GM10248 (cell line): ENCODE measurements at regions of chr6 and their contacts with region 1.

Region 1: DNA sequence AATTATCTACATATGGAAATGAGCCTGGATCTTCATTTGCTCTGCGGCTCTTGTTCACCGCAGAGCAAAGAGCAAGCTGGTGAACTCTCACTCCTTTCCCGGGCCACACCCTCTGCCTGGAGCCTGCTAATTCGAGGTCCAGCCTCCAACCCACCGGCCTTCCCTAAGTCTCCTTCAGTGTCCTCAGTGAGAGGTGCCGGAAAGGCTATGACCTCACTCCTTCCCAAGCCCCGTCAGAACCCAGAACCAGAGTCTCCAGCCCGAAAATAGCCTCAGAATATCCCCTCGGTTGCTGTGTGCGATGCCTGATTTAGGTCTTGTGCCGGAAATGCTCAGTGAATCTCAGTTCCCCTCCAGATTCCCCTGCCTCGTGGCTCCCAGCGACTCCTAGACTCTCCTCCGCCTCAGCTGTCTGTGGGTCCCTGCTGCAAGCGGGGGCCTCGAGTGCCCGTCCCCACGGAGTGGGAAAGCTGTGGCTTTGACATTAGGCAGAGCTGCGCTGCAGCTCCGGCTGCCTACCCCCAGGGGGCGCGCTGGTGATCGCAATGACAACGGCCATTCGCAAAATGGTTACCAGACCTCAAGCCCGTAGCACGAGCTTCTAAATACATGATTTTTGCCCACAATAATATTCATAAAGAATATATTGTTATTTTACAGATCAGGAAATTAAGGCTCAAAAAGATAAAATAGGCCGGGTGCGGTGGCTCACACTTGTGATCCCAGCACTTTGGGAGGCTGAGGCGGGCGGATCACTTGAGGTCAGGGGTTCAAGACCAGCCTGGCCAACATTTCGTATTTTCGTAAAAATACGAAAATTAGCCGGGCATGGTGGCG is 4.1 kb upstream of the BNIP5 start:
- DNase-seq: peak; percentile 83
- CTCF ChIP-seq: peak; percentile 96

Region 2: GRCh38 chr6:36027501-36028087 is 313.2 kb before region 1 on chr6 and contains the start of gene MAPK14:
- CTCF ChIA-PET with region 1: no interaction called
- POLR2A ChIA-PET with region 1: interaction called, 14 read pairs
- DNase-seq: peak; percentile 98
- CTCF ChIP-seq: peak; percentile 87

Region 3: DNA sequence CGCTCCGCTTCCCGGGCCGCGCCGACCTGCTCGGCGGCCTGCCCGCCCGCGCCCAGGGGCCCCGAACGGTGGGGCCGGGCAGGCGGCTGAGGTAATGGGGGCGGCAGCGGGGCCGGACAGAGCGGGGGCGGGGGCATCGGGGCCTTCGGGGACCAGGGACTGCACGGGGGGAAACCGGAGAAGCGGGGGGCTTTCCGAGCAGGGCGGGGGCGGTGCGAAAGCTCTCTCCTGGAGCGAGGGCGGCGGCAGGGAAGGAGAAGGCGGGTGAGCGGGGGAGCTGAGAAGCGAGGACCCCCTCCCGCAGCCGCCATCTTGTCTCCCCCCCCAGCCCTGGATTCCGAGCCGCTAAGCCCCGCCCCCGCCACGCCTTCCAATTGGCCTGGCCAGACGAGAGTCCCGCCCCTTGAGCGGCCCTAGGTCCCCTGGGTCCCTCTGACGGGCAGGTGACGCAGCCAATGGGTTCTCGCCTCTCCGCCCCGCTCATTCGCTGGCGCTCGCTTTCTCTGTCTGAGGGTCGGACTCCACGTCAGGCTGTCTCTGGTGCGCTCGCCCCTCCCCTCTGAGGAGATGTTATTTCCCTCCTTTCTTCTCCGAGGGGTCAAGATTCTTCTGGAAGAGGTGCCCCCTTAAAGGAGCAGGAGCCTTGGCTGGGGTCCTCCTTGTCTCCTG is 143.8 kb before region 1 on chr6:
- CTCF ChIA-PET with region 1: no interaction called
- POLR2A ChIA-PET with region 1: no interaction called
- DNase-seq: peak; percentile 100
- CTCF ChIP-seq: no peak

Region 4: DNA sequence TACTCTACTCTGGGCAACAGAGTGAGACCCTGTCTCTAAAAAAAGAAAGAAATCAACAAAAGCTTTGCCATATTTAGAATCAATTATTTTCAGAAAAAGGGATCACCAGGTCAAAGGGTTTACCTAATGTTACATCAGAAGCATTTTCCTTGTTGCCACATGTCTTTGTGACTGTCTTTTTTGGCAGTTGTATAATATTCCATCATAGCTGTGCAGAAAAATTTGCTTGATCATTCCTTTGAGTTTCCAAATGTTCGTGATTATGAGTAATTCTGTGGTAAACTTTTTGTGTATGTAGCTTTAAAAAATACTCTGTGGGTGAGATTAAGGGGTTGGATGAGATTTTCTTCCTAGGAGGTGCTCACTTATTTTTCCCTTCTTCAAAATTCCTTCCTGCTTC is 44.6 kb before region 1 on chr6:
- CTCF ChIA-PET with region 1: interaction called, 10 read pairs
- POLR2A ChIA-PET with region 1: no interaction called
- DNase-seq: no peak
- CTCF ChIP-seq: no peak

Region 5: DNA sequence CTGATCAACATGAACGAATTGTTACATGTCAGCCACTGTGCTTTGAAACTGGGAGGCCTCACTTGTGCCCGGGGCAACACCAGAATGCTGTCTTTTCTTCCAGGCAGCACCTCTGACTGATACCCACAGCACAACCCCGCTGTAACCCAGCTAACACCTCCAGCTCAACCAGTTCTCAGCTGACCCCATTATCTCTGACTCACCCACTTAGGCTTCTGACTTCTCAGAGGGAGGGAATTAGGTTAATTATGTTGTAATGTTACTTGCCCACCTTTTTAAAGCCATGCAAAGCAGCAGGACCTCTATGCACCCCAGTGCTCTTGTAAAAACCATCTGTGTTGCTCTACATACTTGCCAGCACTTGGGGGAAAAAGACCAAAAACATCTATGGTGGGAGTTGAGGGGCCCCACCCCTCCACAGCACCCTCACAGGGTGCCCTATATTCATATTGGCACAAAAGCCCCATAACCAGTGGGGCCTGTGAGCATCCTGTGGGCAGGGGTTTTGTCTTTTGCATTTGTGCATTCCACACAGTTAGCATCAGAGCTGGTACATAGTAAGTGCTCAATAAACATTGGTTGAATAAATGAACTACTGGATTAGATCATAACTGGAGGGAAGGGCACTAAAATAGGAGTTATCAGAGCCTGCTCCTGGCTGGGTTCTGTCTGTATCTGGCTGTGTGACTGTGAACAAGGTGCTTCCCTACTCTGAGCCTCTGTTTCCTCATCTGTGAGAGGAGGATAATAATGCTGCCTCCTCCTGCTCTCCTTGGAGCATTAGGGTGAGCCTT is 26.4 kb before region 1 on chr6:
- CTCF ChIA-PET with region 1: interaction called, 16 read pairs
- POLR2A ChIA-PET with region 1: no interaction called
- DNase-seq: no peak
- CTCF ChIP-seq: no peak

Region 6: DNA sequence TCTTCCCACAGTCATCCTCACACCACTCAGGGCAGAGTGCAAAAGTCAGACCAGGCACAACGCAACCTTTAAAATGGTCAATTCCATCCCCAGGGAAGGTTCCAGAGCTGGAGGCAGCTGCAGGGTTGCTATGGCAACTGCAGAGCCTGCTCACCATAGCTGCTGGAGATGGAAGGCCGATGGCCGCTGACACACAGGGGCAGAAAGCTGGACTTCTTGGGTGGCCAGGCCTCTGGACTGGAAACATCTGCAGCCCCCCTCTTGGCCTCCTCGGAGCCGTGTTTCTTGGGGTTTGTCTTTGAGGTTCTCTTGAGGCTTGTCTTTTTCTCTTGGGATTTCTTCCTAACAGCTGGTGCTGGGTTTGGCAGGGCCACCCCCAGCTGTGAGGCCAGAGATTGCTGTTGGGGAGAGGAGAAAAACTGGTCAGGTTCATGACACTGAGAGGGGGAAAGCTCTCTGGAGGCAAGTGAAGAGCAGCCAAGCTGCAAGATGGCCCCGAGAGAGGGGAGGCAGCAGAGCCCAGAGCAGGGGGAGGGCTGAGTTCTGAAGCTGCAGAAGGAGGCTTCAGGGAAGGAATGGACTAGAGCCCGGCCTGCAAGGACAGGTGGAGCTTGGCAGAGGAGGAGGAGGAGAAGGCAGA is 14.4 kb before region 1 on chr6:
- CTCF ChIA-PET with region 1: interaction called, 28 read pairs
- POLR2A ChIA-PET with region 1: no interaction called
- DNase-seq: no peak
- CTCF ChIP-seq: no peak

Region 7: GRCh38 chr6:36360241-36361054 is 19.6 kb after region 1 on chr6:
- CTCF ChIA-PET with region 1: interaction called, 323 read pairs
- POLR2A ChIA-PET with region 1: interaction called, 4 read pairs
- DNase-seq: peak; percentile 78
- CTCF ChIP-seq: peak; percentile 81

Region 8: DNA sequence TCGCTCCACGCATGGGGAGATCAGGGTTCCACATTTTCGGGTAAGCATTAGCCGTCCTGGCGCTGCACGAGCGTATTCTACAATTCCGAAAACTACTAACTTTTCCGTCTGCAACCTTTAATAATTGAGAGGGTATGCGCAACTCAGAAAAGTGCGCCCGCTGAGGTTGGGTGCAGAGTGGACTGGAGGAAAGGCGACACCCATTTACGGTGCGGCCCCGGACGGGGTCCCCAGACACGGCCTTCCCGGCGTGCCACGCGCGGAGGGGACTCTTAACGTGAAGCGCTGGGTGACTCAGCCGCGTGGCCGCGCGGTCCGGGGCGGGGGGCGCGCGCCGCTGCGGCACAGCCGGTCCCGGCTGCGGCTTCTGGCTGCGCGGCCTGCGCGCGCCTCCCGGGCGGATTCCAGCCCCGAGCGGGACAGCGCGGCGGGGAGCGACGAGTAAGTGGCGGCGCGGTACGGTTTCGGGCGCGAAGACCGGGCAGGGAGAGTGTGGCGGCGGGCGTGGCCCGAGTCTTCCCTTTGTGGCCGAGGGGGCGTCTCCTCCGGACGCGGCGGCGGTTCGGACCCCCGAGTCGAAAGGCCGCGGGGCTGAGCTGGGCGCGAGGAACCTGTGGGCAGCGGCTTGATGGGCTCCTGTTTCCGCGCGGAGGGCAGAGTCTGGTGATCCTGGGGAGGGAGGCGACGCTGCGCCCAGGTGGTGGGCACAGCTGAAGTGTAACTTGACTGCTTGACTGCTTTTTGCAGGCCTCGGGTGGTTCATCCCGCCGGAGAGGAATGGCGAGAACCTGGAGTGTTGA is 102.0 kb after region 1 on chr6 and contains the starts of genes KCTD20 and PXT1:
- CTCF ChIA-PET with region 1: no interaction called
- POLR2A ChIA-PET with region 1: no interaction called
- DNase-seq: peak; percentile 92
- CTCF ChIP-seq: no peak

Region 9: GRCh38 chr6:36463676-36464075 is 122.8 kb after region 1 on chr6:
- CTCF ChIA-PET with region 1: no interaction called
- POLR2A ChIA-PET with region 1: no interaction called
- DNase-seq: no peak
- CTCF ChIP-seq: no peak